ENCODE measurements at regions of chr14 and their contacts with region 1.

Region 1: DNA sequence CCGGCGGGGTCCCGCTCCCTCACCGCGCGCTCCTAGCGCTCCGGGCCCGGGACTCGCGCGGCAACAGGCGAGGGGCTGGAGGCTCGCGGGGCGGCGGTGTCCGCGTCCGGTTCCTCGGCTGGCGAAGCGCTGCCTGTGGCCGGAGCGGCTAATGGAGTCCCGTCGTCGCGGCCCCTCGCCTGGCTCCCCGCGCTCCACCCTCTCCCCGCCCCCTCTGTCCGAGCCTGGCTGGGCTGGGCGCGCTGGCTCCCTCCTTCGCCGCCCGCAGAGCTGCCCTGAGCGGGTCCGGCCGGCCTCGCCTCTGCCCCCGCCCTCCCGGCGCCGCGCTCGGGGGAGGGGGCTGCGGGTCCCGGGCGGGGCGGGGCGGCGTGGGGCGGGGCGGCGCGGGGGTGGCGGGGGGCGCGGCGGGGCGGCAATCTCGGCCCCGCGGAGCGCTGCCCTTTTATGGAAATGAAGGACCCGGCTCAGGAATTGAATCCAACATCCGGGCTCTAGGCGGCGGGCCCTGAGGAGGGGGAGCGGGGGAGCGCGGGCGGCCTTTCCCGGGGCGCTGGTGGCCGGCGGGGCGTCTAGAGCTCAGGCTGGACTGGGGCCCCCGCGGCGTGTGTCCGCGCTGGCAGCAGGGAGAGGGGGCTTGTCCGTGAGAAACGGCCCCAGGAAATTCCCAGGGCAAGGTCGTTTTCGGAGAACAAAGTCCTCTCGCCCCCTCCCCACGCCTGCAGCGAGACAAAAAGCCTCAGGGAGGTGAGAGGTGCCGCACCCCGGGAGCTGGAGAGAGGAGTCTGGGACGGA is at the start of gene FERMT2:
- DNase-seq: peak; percentile 83
- ATAC-seq: peak; percentile 90
- H3K4me3 ChIP-seq: peak within 1 kb of the TSS; percentile 82
- H3K27ac ChIP-seq: peak within 1 kb of the TSS; percentile 80
- H3K4me1 ChIP-seq: peaks cover 25% of the 10 kb centered on the region
- H3K27me3 ChIP-seq: no peaks in the 10 kb centered on the region
- CTCF ChIP-seq: no peak
- total RNA-seq, gene FERMT2: 29.1 and 38.6 TPM in 2 replicates

Region 2: DNA sequence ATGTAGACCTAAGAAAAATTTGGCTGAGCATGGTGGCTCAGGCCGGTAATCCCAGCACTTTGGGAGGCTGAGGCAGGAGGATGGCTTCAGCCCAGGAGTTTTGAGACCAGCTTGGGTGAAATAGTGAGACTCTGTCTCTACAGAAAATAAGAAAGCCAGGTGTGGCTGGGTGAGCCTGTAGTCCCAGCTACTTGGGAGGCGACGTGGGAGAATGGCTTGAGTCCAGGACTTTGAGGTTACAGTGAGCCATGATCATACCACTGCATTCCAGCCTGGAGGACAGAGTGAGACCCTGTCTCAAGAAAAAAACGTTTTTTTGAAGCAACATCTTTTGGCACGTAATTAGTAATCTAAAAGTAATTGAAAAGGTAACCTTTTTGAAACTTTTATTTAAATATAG is 71.1 kb before region 1 on chr14:
- CTCF ChIA-PET with region 1: no interaction called
- POLR2A ChIA-PET with region 1: no interaction called
- intact Hi-C with region 1: loop called (anchors 5 kb)
- DNase-seq: peak; percentile 9
- ATAC-seq: peak; percentile 59
- H3K4me3 ChIP-seq: no peak overlapping the region
- H3K27ac ChIP-seq: no peak overlapping the region
- H3K4me1 ChIP-seq: no peaks in the 10 kb centered on the region
- H3K27me3 ChIP-seq: no peaks in the 10 kb centered on the region
- CTCF ChIP-seq: no peak

Region 3: DNA sequence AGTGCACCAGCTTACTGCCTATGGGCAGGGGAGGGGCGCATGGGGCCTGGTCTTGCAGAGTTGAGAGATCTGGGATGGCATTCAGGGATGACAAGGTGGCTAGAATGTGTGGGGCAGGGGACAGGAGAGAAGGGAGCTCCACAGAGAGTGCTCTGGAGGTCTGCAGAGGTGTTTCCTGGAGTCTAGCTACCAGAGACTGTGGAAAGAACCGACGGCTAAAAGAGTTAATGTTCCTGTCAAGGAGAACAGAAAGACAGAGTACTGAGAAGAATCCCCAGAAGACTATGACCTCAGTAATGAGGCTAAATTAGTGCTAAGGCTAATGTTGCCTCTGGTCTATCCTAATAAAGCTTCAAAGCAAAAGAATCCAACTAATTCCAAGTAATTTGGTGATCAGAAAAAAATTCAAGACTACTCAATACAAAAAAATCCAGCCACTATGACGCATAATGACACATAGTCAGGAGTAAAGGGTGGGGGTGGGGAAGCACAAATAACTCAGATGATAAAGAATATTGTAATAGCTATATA is 45.0 kb before region 1 on chr14:
- CTCF ChIA-PET with region 1: interaction called, 6 read pairs
- POLR2A ChIA-PET with region 1: interaction called, 7 read pairs
- intact Hi-C with region 1: loop called (anchors 1 kb)
- DNase-seq: peak; percentile 94
- ATAC-seq: peak; percentile 67
- H3K4me3 ChIP-seq: peak overlapping the region; percentile 44
- H3K27ac ChIP-seq: peak overlapping the region; percentile 90
- H3K4me1 ChIP-seq: peaks cover 53% of the 10 kb centered on the region
- H3K27me3 ChIP-seq: no peaks in the 10 kb centered on the region
- CTCF ChIP-seq: no peak

Region 4: DNA sequence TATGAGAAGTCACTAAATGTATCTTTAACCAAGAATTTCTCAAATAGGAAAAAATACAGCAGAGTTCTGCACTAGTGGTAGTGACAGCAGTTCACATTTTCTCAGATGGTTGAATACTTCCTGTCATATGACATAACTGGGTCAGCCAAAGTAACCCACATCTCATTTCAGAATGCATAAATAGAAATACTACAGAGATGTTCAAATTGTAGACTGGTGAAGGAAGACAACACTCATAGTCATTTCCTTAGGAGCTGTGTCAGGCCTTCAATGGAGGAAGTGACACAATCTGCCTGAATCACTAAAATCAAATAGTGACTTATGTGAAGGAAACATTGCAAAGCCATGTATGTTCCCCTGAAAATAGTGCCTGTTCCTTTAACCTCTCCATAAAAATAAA is 32.6 kb before region 1 on chr14:
- CTCF ChIA-PET with region 1: no interaction called
- POLR2A ChIA-PET with region 1: interaction called, 41 read pairs
- intact Hi-C with region 1: loop called (anchors 1 kb)
- DNase-seq: peak; percentile 91
- ATAC-seq: peak; percentile 64
- H3K4me3 ChIP-seq: no peak overlapping the region
- H3K27ac ChIP-seq: peak overlapping the region; percentile 77
- H3K4me1 ChIP-seq: peaks cover 69% of the 10 kb centered on the region
- H3K27me3 ChIP-seq: no peaks in the 10 kb centered on the region
- CTCF ChIP-seq: no peak

Region 5: DNA sequence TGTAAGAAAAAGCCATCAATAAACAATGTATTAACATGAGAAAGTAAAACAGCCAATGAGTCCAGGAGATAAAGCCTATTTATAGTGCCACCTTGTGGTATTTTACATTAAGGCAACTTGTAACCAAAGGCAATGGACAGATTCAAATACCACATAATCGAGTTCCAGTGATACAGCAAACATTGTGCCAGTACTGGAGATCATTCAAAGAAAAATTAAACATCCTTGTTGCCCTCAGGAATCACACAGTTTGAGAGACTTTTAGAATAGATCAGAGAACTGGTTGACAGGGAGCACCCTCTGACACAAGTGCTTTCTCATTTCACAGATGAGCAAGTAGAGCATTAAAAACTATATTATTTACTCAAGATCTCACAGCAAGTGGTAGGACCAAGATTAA is 103.9 kb after region 1 on chr14:
- CTCF ChIA-PET with region 1: interaction called, 10 read pairs
- POLR2A ChIA-PET with region 1: interaction called, 3 read pairs
- intact Hi-C with region 1: no loop called
- DNase-seq: peak; percentile 78
- ATAC-seq: peak; percentile 95
- H3K4me3 ChIP-seq: no peak overlapping the region
- H3K27ac ChIP-seq: no peak overlapping the region
- H3K4me1 ChIP-seq: peaks cover 1% of the 10 kb centered on the region; the same call in 1 of the 2 replicates
- H3K27me3 ChIP-seq: no peaks in the 10 kb centered on the region
- CTCF ChIP-seq: peak; percentile 94